ACHN (cell line): ENCODE measurements at regions of chr1 and their contacts with region 1.

Region 1: DNA sequence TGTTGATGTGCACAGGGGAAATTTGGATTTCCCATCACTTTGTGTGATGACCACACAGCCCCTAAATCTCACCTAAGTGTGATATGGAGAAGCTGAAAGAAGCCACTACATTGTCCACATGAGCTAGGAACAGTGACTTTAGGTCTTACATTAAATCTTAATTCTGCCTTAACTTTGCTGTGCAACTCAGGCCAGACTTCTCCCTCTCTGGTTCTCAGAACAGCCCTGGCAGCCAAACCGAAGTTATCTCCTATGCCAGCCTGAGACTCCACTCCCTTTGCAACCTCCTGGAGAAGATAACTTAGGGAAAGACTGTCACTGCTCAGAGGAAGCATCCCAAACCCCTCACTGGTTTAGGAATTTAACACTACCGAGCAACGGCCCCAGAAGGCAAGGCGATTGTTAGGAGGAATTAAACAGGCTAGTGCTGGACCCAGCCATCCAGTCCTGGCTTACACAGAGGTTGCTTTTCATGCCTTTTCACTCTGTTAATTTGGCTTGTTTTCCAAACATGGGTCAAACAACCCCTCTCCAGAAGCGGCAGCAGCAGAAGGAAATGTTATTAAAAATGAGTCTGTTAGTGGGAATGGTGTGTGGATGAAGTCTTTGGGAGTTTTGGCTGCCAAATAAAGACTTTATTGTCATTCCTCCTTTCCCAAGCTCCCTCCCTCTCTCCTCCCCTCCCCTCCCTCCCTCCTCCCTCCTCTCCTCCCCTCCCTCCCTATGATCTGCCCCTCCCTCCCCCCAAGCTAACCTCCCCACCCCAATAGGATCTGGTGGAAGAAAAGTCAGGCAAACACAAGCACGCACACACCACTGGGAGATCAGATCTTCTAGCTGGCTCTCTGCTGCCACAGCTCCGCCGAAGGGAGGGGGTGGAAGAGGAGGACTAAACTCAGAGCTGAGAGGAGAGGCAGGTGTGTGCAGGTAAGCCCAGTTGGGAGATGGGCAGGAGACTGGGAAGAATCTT is at the start of gene PRELP:
- DNase-seq: no peak

Region 2: DNA sequence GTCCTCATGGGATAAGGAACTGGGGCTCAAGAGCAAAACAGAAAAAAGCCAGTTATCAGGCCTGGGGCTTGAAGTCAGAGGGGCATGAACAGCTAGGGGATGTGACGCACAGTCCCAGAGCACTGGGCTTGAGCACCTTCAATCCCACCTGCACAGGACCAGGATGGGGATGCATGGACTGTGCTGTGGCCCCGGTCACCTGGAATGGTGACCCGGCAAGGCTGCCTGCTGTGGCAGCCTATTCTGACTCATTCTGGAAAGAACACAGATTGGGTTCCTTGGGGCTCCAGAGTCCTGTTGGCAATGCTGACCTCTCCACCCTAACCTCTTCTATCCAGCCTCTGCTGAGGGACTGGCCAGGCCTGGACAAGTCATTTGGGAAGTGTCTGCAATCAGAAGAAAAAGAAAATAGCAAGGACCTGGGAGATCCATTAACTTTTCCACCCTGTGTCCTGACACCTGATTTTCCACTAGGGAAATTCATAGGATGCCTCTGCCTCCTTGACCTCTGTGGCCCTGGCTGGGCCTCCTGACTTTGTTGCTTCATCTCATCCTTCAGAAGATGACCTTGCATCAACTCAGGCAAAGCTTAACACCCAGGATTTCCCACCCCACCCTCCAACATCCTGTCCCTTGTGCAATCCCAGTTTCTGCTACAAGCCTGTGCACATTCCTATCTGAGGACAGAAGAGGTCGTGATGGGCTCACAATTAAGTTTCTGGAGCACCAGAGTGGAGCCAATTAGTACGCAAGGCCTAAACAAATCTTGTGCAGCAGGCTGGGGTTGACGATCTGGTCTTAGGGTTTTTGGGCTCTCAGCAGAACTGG is 106.5 kb before region 1 on chr1:
- in situ Hi-C with region 1: loop called (anchors 10 kb)
- DNase-seq: no peak